Head of caudate nucleus (tissue), 42 donors: ENCODE measurements at regions of chr15 and their contacts with region 1.

Region 1: GRCh38 chr15:52528991-52529926 is 579 bp upstream of the MYO5A start:
- DNase-seq: peak; percentile 66 to 94 (median 86)

Region 2: DNA sequence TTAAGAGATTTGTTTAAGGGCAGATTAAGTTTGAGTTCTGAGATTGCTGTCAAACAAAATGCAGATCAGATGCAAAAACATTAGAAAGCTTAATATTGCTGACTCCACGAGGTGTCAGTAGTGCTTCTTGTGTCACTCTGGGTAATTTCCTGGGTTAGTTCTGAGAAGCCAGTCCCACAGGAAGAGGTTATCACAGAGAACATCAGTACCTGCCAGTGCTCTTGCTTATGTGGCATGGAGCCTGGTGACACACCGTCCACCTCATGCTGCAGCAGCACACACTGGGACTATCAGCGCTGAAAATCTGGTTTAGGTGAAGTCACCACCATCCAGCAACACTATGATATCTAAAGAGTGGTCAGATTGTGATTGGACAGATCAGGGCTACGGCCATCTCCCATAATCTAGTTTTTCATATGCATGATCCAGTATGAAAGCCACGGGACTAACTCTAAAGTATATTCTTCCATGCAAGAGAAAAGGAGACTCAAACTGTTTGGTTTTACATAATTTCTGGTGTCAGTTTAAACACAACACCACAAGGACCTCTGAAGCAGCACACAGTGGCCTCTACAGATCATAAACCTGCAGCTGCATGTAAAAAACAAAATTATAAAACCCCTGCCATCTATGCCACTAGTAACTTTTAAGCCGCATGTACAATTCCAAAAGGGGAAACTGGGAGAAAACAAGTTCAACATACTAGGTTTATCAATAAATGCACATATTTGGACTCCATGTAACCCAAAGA is 197.6 kb before region 1 on chr15:
- intact Hi-C with region 1: loop called (anchors 10 kb)
- DNase-seq: peak in 9 of 42 donors; percentile 28 to 70 (median 46)

Region 3: DNA sequence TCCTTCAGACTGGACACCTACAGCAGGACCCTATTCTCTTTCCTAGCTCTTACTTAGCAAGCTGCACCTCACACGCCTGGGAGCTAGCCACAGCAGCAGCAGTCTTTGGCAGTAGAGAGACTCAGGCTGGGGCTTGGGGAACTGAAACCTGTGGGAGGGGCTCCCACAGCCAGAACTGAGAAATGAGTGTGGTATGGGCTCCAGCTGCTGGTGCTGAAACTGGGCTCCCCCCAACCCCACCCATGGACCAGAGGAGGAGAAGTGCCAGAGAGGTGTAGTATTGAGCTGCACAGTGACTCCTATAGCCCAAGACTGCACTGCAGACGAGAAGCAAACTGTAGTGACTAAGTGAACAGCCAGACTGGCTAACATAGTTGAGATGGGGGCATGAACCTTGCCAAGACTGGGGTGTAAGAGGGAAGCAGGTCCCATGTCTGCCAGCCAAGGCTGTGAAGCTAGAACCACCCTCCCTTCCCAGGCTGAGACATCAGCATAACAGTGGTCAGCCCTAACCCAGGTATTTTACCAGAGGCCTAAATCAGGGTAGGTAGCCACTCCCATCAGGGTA is 63.0 kb before region 1 on chr15:
- intact Hi-C with region 1: loop called (anchors 10 kb)
- DNase-seq: peak in 37 of 42 donors; percentile 15 to 63 (median 40)

Region 4: GRCh38 chr15:52568601-52569256 is 39.5 kb after region 1 on chr15 and contains the start of gene ARPP19:
- intact Hi-C with region 1: loop called (anchors 2 kb)
- DNase-seq: peak; percentile 78 to 97 (median 91)

Region 5: DNA sequence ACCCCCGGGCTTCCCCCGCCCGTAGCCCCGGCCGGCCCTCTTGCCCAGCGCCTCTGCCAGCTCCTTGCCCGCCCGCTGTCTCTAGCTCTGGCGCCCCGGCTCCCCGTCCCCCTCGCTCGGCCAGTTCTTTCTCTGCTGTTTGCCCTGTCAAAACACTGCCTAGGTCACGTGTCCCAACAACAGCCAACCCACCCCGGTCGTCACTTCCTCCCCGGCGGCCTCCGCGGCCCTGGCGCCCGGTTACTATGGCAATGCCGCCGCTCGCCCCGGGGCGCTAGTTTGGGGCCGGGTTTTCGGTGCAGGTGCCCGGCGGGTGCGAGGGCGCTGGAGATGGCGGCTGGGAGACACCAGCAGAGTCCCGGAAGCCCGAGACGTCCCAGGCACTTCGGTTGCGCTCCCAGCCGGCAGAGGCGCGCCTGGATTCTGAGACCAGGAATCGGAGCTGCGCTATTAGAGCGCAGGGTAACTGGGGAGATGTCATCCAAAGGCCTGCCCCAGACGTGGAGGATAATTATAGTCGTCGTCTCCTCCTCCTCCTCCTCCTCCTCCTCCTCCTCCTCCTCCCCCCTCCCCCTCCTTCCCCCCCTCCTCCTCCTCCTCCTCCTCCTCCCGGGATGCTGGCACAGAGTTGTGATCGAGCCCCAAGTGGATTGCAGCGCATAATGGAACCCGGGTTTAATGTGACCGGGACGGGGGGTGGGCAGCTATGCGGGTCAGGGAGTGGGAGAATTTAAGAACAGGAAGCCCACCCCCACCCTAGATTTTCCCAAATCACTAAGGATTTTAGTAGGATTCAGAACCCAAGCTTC is 150.2 kb after region 1 on chr15 and contains the start of gene ATOSA:
- intact Hi-C with region 1: loop called (anchors 2 kb)
- DNase-seq: peak; percentile 94 to 99 (median 97)

Region 6: DNA sequence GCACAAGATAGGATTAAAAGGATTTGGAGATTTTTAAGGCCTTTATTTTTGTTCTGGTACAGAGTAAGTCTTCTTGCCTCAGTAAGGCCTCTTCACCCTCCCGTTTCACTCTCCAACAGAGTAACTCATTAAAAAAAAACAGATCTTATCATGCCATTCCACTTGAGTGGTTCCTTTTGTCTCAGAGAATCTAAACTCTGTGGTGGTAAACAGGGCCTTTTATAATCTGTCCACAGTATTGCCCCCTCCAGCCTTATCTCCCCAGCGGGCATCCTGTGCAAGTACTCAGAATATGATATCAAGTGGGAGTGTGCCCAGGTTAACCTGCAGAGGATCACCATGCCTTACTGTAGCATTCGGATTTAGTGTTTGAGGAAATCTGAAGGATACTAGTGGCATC is 170.2 kb after region 1 on chr15:
- intact Hi-C with region 1: no loop called
- DNase-seq: no peak